ENCODE measurements at regions of chr20 and their contacts with region 1.

Region 1: GRCh38 chr20:17530716-17531664 is at the start of gene BFSP1:
- DNase-seq: peak; percentile 71
- ATAC-seq: peak; percentile 81
- H3K4me3 Mint-ChIP-seq: peak within 1 kb of the TSS; percentile 84
- H3K27ac Mint-ChIP-seq: peak within 1 kb of the TSS; percentile 92
- H3K4me1 Mint-ChIP-seq: peaks cover 28% of the 10 kb centered on the region
- H3K27me3 Mint-ChIP-seq: peaks cover 16% of the 10 kb centered on the region
- total RNA-seq, gene BFSP1: 1.7 to 3.2 TPM

Region 2: GRCh38 chr20:17327185-17328148 is 203.5 kb before region 1 on chr20:
- CTCF ChIA-PET with region 1: no interaction called
- DNase-seq: no peak
- ATAC-seq: no peak
- H3K4me3 Mint-ChIP-seq: no peak overlapping the region
- H3K27ac Mint-ChIP-seq: no peak overlapping the region
- H3K4me1 Mint-ChIP-seq: no peaks in the 10 kb centered on the region
- H3K27me3 Mint-ChIP-seq: peaks cover 10% of the 10 kb centered on the region

Region 3: GRCh38 chr20:17511401-17511800 is 19.6 kb before region 1 on chr20:
- CTCF ChIA-PET with region 1: interaction called, 37 read pairs
- DNase-seq: peak; percentile 81
- ATAC-seq: peak; percentile 60
- H3K4me3 Mint-ChIP-seq: no peak overlapping the region
- H3K27ac Mint-ChIP-seq: peak overlapping the region; percentile 0
- H3K4me1 Mint-ChIP-seq: peaks cover 43% of the 10 kb centered on the region
- H3K27me3 Mint-ChIP-seq: peaks cover 2% of the 10 kb centered on the region